Heart right ventricle (tissue), 16 donors: ENCODE measurements at regions of chr2 and their contacts with region 1.

Region 1: DNA sequence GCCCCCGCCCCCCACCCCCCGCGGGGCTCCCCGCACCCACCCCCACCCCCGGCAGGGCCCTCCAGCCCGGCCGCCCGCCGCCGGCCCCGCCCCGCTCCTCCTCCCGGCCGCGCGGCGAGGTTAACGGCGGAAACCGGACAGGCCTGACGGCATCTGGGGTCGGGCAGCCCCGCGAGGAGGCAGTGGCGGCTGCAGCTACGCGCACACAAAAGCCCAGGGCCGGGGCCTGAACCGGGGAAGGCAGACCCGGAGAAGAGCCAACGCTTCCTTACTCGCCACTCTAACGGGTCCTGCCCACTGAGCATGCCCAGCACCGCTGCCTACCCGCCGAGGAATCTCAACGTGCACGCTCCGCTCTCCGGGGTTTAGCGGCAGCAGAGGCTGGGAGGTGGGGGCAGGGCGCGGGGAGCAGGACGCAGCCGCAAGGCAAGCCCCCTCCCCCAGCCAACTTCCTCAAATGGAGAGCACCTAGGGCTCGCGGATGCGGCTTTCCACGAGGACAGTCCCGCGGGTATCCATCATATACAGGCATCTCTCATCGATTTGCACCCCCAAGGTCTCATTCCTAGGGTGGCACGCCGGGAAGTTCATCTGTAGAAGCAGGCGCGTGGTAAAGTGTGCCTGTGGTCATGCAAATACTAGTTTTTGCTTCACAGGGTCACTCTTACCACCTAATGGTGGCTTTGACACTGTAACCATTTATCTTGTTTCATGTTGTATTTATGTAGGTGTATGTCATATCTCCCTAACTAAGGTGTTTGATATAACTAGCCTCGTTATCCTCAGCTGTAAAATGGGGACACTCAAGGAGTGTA is at the start of gene MEMO1:
- DNase-seq: peak; percentile 93 to 95
- ATAC-seq: peak; percentile 89 to 95 (median 94)
- H3K4me3 ChIP-seq: peak within 1 kb of the TSS; percentile 67 to 97 (median 87)
- H3K27ac ChIP-seq: peak within 1 kb of the TSS; percentile 90 to 98 (median 96)
- H3K4me1 ChIP-seq: peaks cover 0 to 45% (median 28%) of the 10 kb centered on the region in 9 donors
- H3K27me3 ChIP-seq: no peaks in the 10 kb centered on the region
- CTCF ChIP-seq: peak in 1 of 9 donors; percentile 12
- total RNA-seq, gene MEMO1: 43.6 to 67.3 (median 54.1) TPM

Region 2: GRCh38 chr2:31922542-31923408 is 88.1 kb before region 1 on chr2:
- intact Hi-C with region 1: loop called in 1 of 10 experiments (anchors 1 kb)
- DNase-seq: no peak
- ATAC-seq: peak in 1 of 8 donors; percentile 26
- H3K4me3 ChIP-seq: peak overlapping the region in 1 of 10 donors; percentile 1
- H3K27ac ChIP-seq: peak overlapping the region in 5 of 10 donors; percentile 0 to 54 (median 47)
- H3K4me1 ChIP-seq: peaks cover 0 to 19% (median 0%) of the 10 kb centered on the region in 9 donors
- H3K27me3 ChIP-seq: no peaks in the 10 kb centered on the region
- CTCF ChIP-seq: no peak

Region 3: DNA sequence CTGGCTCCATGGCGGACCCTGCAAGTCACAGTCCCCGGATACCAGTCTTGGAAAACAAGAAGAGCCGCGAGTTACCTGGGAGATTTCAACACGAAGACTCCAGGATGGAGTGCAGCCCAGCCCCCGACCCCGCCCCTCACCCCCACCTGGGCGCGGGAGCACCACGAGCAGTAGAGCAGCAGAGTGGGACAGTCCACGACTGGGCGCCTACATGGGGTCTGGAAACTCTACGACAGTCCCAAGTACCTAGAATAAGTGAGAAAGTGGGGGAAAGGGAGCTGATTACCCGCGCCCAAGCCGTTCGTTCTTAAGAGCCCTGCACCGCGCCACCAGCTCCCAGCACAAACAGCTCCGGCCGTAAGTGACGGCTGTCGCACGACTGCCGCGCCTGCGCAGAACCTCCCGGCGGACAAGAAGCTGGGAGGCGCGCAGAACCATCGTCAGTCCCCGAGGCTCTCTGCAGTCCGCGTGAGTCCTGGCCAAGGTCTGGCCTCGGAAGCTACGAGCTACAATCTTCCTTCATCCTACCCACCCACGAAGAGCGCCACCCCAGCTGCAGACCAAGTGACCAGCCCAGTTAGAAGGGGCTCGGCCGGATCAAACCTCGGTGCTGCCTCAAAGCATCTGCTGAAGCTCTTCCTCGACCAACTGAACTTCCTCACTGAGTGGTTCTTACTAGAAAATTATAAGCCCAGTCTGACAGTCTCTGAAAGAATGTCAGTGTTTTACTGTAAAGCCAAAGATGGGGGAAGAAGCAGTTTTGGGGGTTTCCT is 28.8 kb after region 1 on chr2 and contains the start of gene DPY30:
- intact Hi-C with region 1: loop called in 1 of 10 experiments (anchors 2 kb)
- DNase-seq: peak; percentile 92 to 94
- ATAC-seq: peak; percentile 97 to 99 (median 98)
- H3K4me3 ChIP-seq: peak within 1 kb of the TSS; percentile 55 to 98 (median 86)
- H3K27ac ChIP-seq: peak within 1 kb of the TSS in 9 of 10 donors; percentile 75 to 91 (median 84)
- H3K4me1 ChIP-seq: peaks cover 0 to 17% (median 10%) of the 10 kb centered on the region in 9 donors
- H3K27me3 ChIP-seq: no peaks in the 10 kb centered on the region
- CTCF ChIP-seq: peak in 1 of 9 donors; percentile 12
- total RNA-seq, gene DPY30: 35.1 to 47.7 (median 42.9) TPM

Region 4: DNA sequence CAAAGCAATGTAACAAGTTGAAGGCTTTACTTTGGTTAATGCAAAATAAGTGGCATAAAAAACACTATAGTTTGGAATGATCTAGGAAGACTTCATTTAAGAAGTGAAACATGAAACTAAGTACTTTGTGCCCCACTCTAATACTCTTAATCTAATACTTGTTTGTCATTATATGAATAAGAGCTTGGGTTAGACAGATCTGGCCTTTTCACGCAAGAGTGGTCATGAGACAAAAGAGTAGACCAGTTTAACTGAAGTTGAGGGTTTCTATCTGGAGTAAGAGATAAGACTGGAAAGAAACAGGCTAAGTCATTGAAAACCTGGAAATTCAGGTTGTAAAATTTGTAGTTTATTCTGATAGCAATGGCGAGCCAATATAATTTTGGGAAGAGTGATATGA is 157.6 kb after region 1 on chr2:
- intact Hi-C with region 1: loop called in 1 of 10 experiments (anchors 10 kb)
- DNase-seq: no peak
- ATAC-seq: no peak
- H3K4me3 ChIP-seq: no peak overlapping the region
- H3K27ac ChIP-seq: no peak overlapping the region
- H3K4me1 ChIP-seq: peaks cover 0 to 26% (median 17%) of the 10 kb centered on the region in 9 donors
- H3K27me3 ChIP-seq: no peaks in the 10 kb centered on the region
- CTCF ChIP-seq: no peak